ENCODE measurements at regions of chr15 and their contacts with region 1.

Region 1: GRCh38 chr15:66765478-66766281 is 63.6 kb downstream of the SMAD6 start:
- DNase-seq: peak; percentile 72 to 93
- H3K4me3 ChIP-seq: no peak overlapping the region
- H3K27ac ChIP-seq: peak overlapping the region; percentile 53 to 69
- H3K4me1 ChIP-seq: peaks cover 23 to 39% of the 10 kb centered on the region in 2 donors
- H3K27me3 ChIP-seq: no peaks in the 10 kb centered on the region
- CTCF ChIP-seq: no peak
- POLR2A ChIP-seq: no peak

Region 2: DNA sequence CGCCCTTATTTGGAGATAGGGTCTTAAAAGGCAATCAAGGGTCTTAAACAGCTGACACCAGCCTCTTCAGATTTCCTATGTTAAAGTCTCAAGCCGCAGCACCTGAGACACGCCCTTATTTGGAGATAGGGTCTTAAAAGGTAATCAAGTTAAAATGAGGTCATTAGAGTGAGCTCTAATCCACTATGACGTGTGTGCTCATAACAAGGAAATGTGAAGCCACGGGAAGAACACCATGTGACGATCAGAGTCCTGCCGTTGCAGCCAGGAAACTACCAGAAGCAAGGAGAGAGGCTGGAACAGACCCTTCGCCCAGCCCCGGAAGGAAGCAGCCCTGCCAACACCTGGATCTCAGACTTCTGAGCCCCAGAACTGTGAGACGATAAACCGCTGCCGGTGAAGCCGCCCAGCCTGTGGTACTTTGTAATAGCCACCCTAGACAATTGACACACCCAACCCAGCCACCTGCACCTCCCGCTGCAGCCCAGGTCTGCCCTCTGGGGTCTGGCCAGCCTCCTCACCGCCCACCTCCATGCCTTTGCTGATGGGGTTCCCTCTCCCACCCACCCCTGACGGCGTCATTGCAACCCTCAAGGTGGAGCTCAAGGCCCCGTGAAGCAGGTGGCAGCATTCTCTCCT is 650.0 kb before region 1 on chr15:
- intact Hi-C with region 1: no loop called
- DNase-seq: no peak
- H3K4me3 ChIP-seq: no peak overlapping the region
- H3K27ac ChIP-seq: no peak overlapping the region
- H3K4me1 ChIP-seq: no peaks in the 10 kb centered on the region
- H3K27me3 ChIP-seq: peaks cover 0 to 15% of the 10 kb centered on the region in 2 donors
- CTCF ChIP-seq: no peak
- POLR2A ChIP-seq: no peak

Region 3: GRCh38 chr15:66700802-66701421 is 64.8 kb before region 1 on chr15:
- intact Hi-C with region 1: loop called (anchors 10 kb)
- DNase-seq: peak; percentile 94 to 96
- H3K4me3 ChIP-seq: peak overlapping the region; percentile 57 to 85 (median 73)
- H3K27ac ChIP-seq: peak overlapping the region; percentile 79 to 81
- H3K4me1 ChIP-seq: peaks cover 0 to 7% of the 10 kb centered on the region in 2 donors
- H3K27me3 ChIP-seq: no peaks in the 10 kb centered on the region
- CTCF ChIP-seq: no peak
- POLR2A ChIP-seq: no peak

Region 4: GRCh38 chr15:67531379-67532059 is 765.8 kb after region 1 on chr15:
- intact Hi-C with region 1: no loop called
- DNase-seq: no peak
- H3K4me3 ChIP-seq: no peak overlapping the region
- H3K27ac ChIP-seq: no peak overlapping the region
- H3K4me1 ChIP-seq: no peaks in the 10 kb centered on the region
- H3K27me3 ChIP-seq: no peaks in the 10 kb centered on the region
- CTCF ChIP-seq: no peak
- POLR2A ChIP-seq: no peak